Ovary (tissue), 10 donors: ENCODE measurements at regions of chr9 and their contacts with region 1.

Region 1: DNA sequence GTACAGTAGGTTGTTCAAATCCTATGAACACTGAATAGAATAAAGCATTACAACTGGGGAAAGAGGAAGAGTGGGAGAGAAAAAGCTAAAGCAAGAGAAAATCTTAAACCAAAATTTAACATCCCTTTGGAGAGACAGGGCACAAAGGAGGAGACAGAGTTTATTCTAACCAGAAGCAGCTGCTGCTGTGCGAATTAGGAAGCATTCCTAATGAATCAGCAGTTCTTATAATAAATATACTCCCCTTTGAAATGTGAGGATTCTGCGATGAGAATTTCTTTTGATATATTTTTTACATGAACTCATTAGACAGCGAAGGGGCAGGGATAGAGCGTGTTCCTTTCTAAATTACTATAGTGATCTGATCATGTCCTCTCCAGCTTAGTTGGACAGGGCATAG is 233.4 kb downstream of the DENND1A start:
- DNase-seq: no peak
- H3K4me3 ChIP-seq: no peak overlapping the region
- H3K27ac ChIP-seq: no peak overlapping the region
- H3K4me1 ChIP-seq: no peaks in the 10 kb centered on the region
- H3K27me3 ChIP-seq: no peaks in the 10 kb centered on the region
- CTCF ChIP-seq: no peak
- EP300 ChIP-seq: no peak
- POLR2A ChIP-seq: no peak

Region 2: GRCh38 chr9:123485216-123485615 is 211.3 kb before region 1 on chr9:
- intact Hi-C with region 1: no loop called
- DNase-seq: no peak
- H3K4me3 ChIP-seq: no peak overlapping the region
- H3K27ac ChIP-seq: no peak overlapping the region
- H3K4me1 ChIP-seq: no peaks in the 10 kb centered on the region
- H3K27me3 ChIP-seq: no peaks in the 10 kb centered on the region
- CTCF ChIP-seq: no peak
- EP300 ChIP-seq: no peak
- POLR2A ChIP-seq: no peak

Region 3: GRCh38 chr9:123669346-123669745 is 27.1 kb before region 1 on chr9:
- intact Hi-C with region 1: loop called in 1 of 4 experiments (anchors 2 kb)
- DNase-seq: no peak
- H3K4me3 ChIP-seq: no peak overlapping the region
- H3K27ac ChIP-seq: no peak overlapping the region
- H3K4me1 ChIP-seq: no peaks in the 10 kb centered on the region
- H3K27me3 ChIP-seq: no peaks in the 10 kb centered on the region
- CTCF ChIP-seq: no peak
- EP300 ChIP-seq: no peak
- POLR2A ChIP-seq: no peak